Activated naive CD4-positive, alpha-beta T cell treated with anti-CD3 and anti-CD28 coated beads for 36 hours (primary cell): ENCODE measurements at regions of chr19 and their contacts with region 1.

Region 1: GRCh38 chr19:7943444-7944176 is at the start of gene TIMM44:
- DNase-seq: peak; percentile 100
- H3K4me3 Mint-ChIP-seq: peak within 1 kb of the TSS; percentile 95
- H3K27ac Mint-ChIP-seq: peak within 1 kb of the TSS; percentile 94
- H3K4me1 Mint-ChIP-seq: peaks cover 41% of the 10 kb centered on the region
- H3K27me3 Mint-ChIP-seq: no peaks in the 10 kb centered on the region
- total RNA-seq, gene TIMM44: 88.8 to 88.9 TPM

Region 2: DNA sequence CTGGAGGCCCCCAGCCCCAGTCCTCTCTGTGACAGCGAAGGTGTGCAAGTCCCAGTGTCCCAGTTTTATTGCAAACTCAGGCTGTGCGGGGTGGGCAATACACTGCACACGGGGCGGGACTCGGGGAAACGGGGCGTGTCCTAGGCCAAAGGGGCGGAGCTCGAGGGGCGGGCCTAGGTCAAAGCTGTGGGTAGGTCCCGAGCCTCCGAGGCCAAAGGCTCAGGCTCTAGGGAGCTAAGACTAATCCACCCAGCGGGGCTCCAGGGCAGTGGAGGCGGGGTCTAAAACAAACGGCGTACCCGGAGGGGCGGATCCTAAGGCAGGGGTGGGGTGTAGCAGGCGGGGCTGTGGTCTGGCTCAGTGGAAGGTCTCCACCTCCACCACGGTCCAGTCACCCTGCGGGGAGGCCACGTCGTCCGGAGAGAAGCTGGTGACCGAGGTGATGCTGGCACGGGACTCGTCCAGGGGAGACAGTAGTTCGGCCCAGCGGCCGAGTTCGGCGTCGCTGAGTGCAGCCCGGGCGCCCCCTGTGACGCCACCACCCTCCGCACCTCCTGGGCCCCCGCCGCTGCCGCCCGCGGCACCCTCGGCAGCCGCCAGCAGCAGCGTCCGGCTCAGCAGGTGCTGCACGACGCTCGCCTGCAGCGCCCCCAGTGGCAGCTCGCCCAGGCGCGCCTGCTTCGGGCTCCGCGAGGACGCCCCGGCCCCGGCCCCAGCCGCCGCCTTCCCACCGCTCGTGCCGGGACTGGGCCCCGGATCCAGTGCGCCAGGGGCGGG is 74.7 kb before region 1 on chr19:
- CTCF ChIA-PET with region 1: interaction called, 12 read pairs
- intact Hi-C with region 1: no loop called
- DNase-seq: peak; percentile 82
- H3K4me3 Mint-ChIP-seq: peak overlapping the region; percentile 68
- H3K27ac Mint-ChIP-seq: peak overlapping the region; percentile 59
- H3K4me1 Mint-ChIP-seq: peaks cover 46% of the 10 kb centered on the region
- H3K27me3 Mint-ChIP-seq: peaks cover 35% of the 10 kb centered on the region

Region 3: DNA sequence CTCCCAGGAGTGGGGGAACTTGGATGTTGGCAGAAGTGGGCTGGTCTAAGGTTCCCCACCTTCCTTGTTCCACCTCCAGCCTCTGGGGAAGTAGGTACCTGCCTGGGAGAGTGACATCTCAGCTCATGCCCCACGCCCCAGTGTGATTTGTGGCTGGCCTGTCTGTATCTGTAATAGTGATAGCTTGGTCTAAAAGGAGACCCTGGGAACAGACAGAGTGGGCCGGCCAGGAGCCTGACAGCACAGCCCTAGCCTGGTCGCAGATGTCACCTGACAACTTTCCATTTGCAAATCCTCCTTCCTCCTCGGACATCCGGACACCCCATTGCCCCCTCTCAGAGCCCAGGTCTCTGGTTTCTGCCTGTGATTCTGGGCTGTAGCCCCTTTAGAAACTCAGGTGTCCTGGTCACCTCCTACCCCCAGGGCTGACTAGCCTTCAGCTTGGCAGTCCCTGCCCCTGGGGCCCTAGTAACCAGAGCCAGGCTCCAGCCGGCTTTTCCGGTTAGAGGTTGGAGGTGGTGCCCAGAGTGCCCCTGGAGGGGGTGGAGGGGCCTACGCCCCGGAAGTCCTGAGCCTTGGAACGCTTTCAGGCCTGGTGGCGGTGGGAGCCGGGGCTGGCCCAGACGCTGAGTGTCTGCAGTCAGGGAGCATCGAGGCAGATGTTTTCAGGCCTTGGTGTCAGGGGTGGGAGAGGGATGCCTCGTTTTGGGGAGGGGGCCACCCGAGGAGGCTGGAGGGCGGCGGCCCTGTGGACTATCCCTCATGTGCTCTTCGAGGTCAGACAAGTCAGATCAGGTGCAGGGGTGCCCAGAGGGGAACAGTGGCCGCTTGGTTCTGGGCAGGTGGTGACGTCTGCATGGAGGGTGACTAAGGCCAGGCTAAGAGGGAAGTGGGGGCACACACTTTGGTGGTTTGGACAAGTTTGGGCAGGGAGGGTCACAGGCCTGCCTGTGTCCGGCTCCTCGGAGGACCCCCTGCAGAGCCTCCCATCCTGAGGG is 48.7 kb before region 1 on chr19:
- CTCF ChIA-PET with region 1: no interaction called
- intact Hi-C with region 1: no loop called
- DNase-seq: no peak
- H3K4me3 Mint-ChIP-seq: no peak overlapping the region
- H3K27ac Mint-ChIP-seq: no peak overlapping the region
- H3K4me1 Mint-ChIP-seq: no peaks in the 10 kb centered on the region
- H3K27me3 Mint-ChIP-seq: peaks cover 17% of the 10 kb centered on the region

Region 4: DNA sequence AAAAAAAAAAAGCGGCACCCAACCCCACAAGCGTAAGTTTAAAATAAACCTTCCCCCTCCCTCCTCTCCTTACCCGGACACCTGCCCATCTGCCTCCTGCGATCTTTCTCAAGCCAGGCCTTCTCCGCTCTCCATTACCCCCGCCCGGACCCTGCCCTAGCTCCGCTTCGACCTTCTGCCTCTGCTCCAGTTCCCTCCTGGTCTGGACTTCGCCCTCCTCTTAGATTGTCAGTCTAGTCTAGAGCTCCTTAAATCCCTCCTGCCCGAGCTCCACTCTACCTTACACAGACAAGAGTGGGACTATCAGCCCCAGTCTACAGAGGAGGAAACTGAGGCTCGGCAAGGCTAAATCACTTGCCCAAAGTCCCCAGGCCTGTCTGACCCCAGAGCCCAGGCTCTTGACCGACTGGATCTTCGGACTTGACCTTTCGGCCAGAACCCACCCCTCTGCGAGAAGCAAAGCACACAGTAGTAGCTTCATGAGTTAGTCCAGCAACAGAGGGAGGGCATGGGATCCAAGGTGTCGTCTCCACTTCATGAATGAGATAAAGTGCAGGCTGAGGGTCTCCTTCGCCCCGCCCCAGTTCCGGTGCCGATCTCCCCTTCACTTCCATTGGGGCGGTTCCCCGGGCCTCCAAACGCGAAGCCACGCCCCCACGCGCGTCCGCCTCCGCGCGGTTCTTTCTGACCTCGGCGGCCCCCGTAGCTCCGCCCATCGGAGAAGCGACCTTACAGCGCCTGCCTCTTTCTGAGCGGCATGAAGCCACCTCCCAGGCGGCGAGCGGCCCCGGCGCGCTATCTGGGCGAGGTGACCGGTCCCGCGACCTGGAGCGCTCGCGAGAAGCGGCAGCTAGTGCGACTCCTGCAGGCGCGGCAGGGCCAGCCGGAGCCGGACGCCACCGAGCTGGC is 23.7 kb before region 1 on chr19 and contains the start of gene SNAPC2:
- CTCF ChIA-PET with region 1: interaction called, 12 read pairs
- intact Hi-C with region 1: loop called (anchors 1 kb)
- DNase-seq: peak; percentile 96
- H3K4me3 Mint-ChIP-seq: peak within 1 kb of the TSS; percentile 81
- H3K27ac Mint-ChIP-seq: peak within 1 kb of the TSS; percentile 73
- H3K4me1 Mint-ChIP-seq: peaks cover 38% of the 10 kb centered on the region
- H3K27me3 Mint-ChIP-seq: peaks cover 25% of the 10 kb centered on the region
- total RNA-seq, gene SNAPC2: 10.9 to 12.4 TPM

Region 5: GRCh38 chr19:8005534-8006256 is 62.1 kb after region 1 on chr19 and contains the start of gene ELAVL1:
- CTCF ChIA-PET with region 1: interaction called, 18 read pairs
- intact Hi-C with region 1: loop called (anchors 1 kb)
- DNase-seq: peak; percentile 89
- H3K4me3 Mint-ChIP-seq: peak within 1 kb of the TSS; percentile 94
- H3K27ac Mint-ChIP-seq: peak within 1 kb of the TSS; percentile 78
- H3K4me1 Mint-ChIP-seq: peaks cover 35% of the 10 kb centered on the region
- H3K27me3 Mint-ChIP-seq: no peaks in the 10 kb centered on the region
- total RNA-seq, gene ELAVL1: 135 to 140 TPM

Region 6: GRCh38 chr19:8069096-8069973 is 125.7 kb after region 1 on chr19:
- CTCF ChIA-PET with region 1: interaction called, 17 read pairs
- intact Hi-C with region 1: loop called (anchors 1 kb)
- DNase-seq: peak; percentile 33
- H3K4me3 Mint-ChIP-seq: no peak overlapping the region
- H3K27ac Mint-ChIP-seq: no peak overlapping the region
- H3K4me1 Mint-ChIP-seq: no peaks in the 10 kb centered on the region
- H3K27me3 Mint-ChIP-seq: no peaks in the 10 kb centered on the region

Region 7: DNA sequence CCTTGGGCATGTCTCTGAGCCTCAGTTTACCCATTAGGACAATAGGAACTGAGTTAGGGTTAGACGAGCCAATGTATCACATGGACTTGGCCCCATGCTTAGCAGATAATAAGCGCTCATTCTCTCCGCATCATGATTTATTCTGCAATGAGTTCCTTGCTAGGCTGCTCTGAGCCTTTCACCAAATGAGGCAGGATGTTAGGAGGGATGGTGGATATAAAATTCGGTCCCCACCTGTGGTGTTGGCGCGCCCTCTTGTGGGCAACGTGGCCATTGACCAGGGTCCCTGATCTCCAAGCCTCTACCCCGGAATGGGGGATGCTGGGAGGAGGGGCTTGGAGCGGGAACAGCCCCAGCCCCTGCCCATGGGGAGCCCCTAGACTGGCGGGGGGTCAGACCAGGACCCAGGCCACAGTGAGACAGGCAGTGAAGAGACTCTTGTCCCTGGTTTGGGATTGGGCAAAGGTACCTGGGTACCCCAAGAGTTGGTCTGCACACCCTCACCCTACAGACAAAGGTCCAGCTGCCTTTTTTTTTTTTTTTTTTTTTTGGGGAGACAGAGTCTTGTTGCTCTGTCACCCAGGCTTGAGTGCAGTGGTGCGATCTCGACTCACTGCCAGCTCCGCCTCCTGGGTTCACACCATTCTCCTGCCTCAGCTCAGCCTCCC is 309.4 kb after region 1 on chr19:
- CTCF ChIA-PET with region 1: interaction called, 5 read pairs
- intact Hi-C with region 1: loop called (anchors 1 kb)
- DNase-seq: peak; percentile 91
- H3K4me3 Mint-ChIP-seq: no peak overlapping the region
- H3K27ac Mint-ChIP-seq: no peak overlapping the region
- H3K4me1 Mint-ChIP-seq: no peaks in the 10 kb centered on the region
- H3K27me3 Mint-ChIP-seq: no peaks in the 10 kb centered on the region